Naive thymus-derived CD4-positive, alpha-beta T cell (primary cell): ENCODE measurements at regions of chr3 and their contacts with region 1.

Region 1: DNA sequence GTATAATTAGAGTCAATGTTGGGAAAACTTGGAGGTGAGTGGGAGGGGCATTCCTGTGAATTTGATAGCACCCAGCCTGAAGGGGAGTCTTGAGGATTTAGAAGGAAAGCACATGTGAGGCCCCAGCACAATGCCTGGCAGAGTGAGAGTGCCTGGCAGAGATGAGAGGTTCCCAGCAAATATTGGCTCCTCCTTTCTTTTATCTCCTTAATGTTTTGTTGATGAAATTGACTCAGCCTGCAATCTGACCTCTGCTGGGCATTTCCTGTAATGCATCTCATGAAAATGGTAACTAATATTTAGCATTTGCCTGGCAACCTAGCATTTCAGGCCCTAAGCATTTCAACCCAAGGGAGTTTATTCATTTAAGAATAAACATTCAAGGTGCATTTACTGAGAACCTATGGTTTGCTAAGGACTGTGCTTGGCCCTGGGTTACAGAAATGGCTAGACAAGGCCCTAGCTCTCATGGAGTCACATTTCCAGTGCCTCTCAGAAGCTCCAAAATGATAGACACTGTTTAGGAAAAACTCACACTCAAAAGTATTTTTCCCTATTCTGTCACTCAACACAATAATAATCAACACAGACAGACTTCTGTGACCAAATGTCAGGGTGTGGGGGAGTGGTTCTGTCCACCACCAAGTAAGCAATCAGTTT is 19.0 kb downstream of the PDHB start:
- DNase-seq: peak in 7 of 9 donors; percentile 39 to 59 (median 47)
- ATAC-seq: peak; percentile 83
- H3K4me3 ChIP-seq: no peak overlapping the region
- H3K4me3 Mint-ChIP-seq: no peak overlapping the region
- H3K27ac ChIP-seq: no peak overlapping the region
- H3K27ac Mint-ChIP-seq: peak overlapping the region in 3 of 9 donors; percentile 5 to 48 (median 9)
- H3K4me1 ChIP-seq: no peaks in the 10 kb centered on the region
- H3K4me1 Mint-ChIP-seq: peaks cover 2 to 14% (median 8%) of the 10 kb centered on the region in 7 donors
- H3K27me3 ChIP-seq: no peaks in the 10 kb centered on the region
- H3K27me3 Mint-ChIP-seq: no peaks in the 10 kb centered on the region

Region 2: GRCh38 chr3:57961828-57962447 is 452.7 kb before region 1 on chr3:
- CTCF ChIA-PET with region 1: no interaction called
- POLR2A ChIA-PET with region 1: no interaction called
- intact Hi-C with region 1: loop called in 1 of 2 experiments (anchors 10 kb)
- DNase-seq: peak in 4 of 9 donors; percentile 8 to 21 (median 18)
- ATAC-seq: no peak
- H3K4me3 ChIP-seq: no peak overlapping the region
- H3K4me3 Mint-ChIP-seq: no peak overlapping the region
- H3K27ac ChIP-seq: no peak overlapping the region
- H3K27ac Mint-ChIP-seq: no peak overlapping the region
- H3K4me1 ChIP-seq: peaks cover 0 to 2% of the 10 kb centered on the region in 2 donors
- H3K4me1 Mint-ChIP-seq: peaks cover 3 to 13% (median 8%) of the 10 kb centered on the region in 7 donors
- H3K27me3 ChIP-seq: no peaks in the 10 kb centered on the region
- H3K27me3 Mint-ChIP-seq: peaks cover 0 to 1% (median 0%) of the 10 kb centered on the region in 5 donors

Region 3: DNA sequence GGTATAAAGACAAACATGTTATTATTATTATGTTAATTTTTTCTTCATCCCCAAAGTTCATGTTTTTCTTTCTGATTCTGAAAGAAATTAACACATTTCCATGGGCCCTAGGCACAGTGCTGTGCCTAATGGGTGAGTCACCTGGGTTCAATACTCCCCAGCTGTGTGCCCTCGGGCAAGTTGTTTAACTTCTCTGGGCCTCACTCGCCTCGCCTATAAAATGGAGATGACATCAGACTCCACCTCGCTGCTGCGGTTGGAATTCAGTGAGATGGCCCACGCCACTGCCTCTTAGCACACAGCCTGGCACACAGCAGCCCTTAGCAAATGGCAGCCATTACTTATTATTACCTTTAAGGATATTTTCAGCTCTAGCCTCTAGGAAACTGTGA is 226.5 kb before region 1 on chr3:
- CTCF ChIA-PET with region 1: no interaction called
- POLR2A ChIA-PET with region 1: no interaction called
- intact Hi-C with region 1: loop called (anchors 1 to 10 kb)
- DNase-seq: no peak
- ATAC-seq: no peak
- H3K4me3 ChIP-seq: no peak overlapping the region
- H3K4me3 Mint-ChIP-seq: no peak overlapping the region
- H3K27ac ChIP-seq: no peak overlapping the region
- H3K27ac Mint-ChIP-seq: no peak overlapping the region
- H3K4me1 ChIP-seq: no peaks in the 10 kb centered on the region
- H3K4me1 Mint-ChIP-seq: peaks cover 0 to 3% (median 0%) of the 10 kb centered on the region in 7 donors
- H3K27me3 ChIP-seq: no peaks in the 10 kb centered on the region
- H3K27me3 Mint-ChIP-seq: no peaks in the 10 kb centered on the region

Region 4: GRCh38 chr3:58324391-58325390 is 90.0 kb before region 1 on chr3:
- CTCF ChIA-PET with region 1: interaction called, 8 read pairs
- POLR2A ChIA-PET with region 1: no interaction called
- intact Hi-C with region 1: loop called (anchors 1 kb)
- DNase-seq: peak in 1 of 9 donors; percentile 26
- ATAC-seq: peak; percentile 27
- H3K4me3 ChIP-seq: no peak overlapping the region
- H3K4me3 Mint-ChIP-seq: peak overlapping the region in 1 of 10 donors; percentile 24
- H3K27ac ChIP-seq: peak overlapping the region; percentile 14
- H3K27ac Mint-ChIP-seq: peak overlapping the region in 8 of 9 donors; percentile 25 to 85 (median 68)
- H3K4me1 ChIP-seq: no peaks in the 10 kb centered on the region
- H3K4me1 Mint-ChIP-seq: peaks cover 0 to 25% (median 18%) of the 10 kb centered on the region in 7 donors
- H3K27me3 ChIP-seq: no peaks in the 10 kb centered on the region
- H3K27me3 Mint-ChIP-seq: no peaks in the 10 kb centered on the region

Region 5: GRCh38 chr3:58349792-58350626 is 64.7 kb before region 1 on chr3:
- CTCF ChIA-PET with region 1: no interaction called
- POLR2A ChIA-PET with region 1: interaction called, 3 read pairs
- intact Hi-C with region 1: loop called in 1 of 2 experiments (anchors 1 kb)
- DNase-seq: no peak
- ATAC-seq: peak; percentile 33
- H3K4me3 ChIP-seq: no peak overlapping the region
- H3K4me3 Mint-ChIP-seq: peak overlapping the region in 3 of 10 donors; percentile 1 to 67 (median 20)
- H3K27ac ChIP-seq: no peak overlapping the region
- H3K27ac Mint-ChIP-seq: peak overlapping the region in 2 of 9 donors; percentile 30 to 87
- H3K4me1 ChIP-seq: peaks cover 4 to 10% of the 10 kb centered on the region in 2 donors
- H3K4me1 Mint-ChIP-seq: peaks cover 44 to 84% (median 49%) of the 10 kb centered on the region in 7 donors
- H3K27me3 ChIP-seq: no peaks in the 10 kb centered on the region
- H3K27me3 Mint-ChIP-seq: no peaks in the 10 kb centered on the region

Region 6: DNA sequence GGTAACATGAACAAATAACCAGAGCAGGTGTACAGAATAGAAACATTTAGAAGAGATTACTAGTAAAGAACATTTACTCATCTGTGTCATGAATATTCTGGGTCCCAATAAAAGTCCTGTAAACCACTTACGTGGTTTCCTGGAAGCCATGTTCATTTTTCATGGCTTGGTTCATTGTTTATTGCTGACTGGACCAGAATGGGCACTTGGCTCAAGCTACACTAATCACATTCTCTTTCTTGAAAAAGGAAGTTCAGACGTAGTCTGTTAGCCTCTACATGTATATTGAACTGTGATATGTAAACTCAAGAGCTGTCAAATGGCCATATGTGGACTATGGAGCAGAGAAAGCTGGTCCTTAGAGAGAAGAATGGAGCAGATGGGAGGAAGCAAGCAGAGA is 390.2 kb after region 1 on chr3:
- CTCF ChIA-PET with region 1: no interaction called
- POLR2A ChIA-PET with region 1: no interaction called
- intact Hi-C with region 1: no loop called
- DNase-seq: no peak
- ATAC-seq: no peak
- H3K4me3 ChIP-seq: no peak overlapping the region
- H3K4me3 Mint-ChIP-seq: no peak overlapping the region
- H3K27ac ChIP-seq: no peak overlapping the region
- H3K27ac Mint-ChIP-seq: no peak overlapping the region
- H3K4me1 ChIP-seq: no peaks in the 10 kb centered on the region
- H3K4me1 Mint-ChIP-seq: no peaks in the 10 kb centered on the region
- H3K27me3 ChIP-seq: no peaks in the 10 kb centered on the region
- H3K27me3 Mint-ChIP-seq: peaks cover 0 to 4% (median 0%) of the 10 kb centered on the region in 5 donors